K562 (cell line): ENCODE measurements at regions of chr15 and their contacts with region 1.

Region 1: DNA sequence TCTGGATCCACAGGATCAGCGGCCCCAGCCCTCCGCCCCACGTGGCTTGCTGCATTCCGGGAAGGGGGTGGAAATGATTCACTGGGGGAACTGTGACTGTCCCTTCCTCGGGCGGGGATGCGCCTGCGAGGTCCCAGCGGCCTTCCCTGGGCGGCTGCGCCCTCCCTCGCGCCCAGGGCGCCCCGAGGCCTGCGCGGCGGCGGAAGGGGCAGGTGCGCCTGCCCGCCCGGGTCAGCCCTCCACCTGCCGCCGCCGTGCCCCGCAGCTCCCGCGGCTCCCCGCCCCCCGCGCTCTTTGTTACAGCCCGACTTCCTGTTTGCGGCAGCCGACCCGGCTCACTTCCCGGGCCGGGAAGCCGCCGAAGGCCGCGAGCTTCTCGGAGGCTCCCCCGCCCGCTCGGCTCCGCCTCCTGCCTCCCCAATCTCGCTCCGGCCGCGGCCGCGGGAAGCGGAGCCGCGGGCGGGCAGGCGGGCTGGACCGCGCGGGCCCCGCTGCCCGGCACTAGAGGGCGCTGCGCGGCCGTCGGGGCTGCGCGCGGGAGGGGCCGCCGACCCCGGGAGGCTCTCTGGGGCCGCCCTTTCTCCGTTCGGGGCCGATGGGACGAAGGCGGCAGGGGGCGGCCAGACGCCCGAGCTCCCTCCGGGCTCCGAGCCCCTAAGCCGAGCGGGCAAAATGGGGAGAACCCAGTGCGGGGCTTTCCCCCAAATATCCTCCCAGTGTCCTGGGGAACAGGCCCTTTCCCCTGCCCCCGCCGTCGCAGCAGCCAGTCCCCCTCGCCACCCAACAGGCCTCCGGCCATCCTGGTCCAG is 11.5 kb upstream of the CHAC1 start:
- DNase-seq: peak; percentile 81 to 95 (median 94)
- ATAC-seq: peak; percentile 94
- H3K4me3 ChIP-seq: peak overlapping the region; percentile 56
- H3K27ac ChIP-seq: peak overlapping the region; percentile 71; the same call in 2 of the 3 replicates
- H3K4me1 ChIP-seq: peaks cover 5 to 28% of the 10 kb centered on the region in 2 experiments; a peak in 4 of 5 replicates
- H3K27me3 ChIP-seq: peaks cover 2 to 13% of the 10 kb centered on the region in 2 experiments; a peak in 3 of 5 replicates
- CTCF ChIP-seq: peak; percentile 48 to 68 (median 63)
- EP300 ChIP-seq: no peak
- POLR2A ChIP-seq: peak; percentile 54; the same call in 1 of the 2 replicates
- RAD21 ChIP-seq: peak; percentile 40 to 72

Region 2: DNA sequence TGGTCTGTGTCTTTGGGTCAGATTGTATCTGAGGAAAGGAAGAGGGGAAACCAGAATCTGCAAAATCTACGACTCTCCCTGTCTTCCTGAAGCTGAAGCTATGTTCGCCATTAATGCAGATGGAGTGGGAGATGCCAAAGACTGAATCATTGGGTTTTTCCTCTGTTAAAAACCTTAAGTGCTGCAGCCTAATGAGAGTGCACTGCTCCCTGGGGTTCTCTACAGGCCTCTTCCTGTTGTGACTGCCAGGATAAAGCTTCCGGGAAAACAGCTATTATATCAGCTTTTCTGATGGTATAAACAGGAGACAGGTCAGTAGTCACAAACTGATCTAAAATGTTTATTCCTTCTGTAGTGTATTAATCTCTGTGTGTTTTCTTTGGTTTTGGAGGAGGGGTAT is 210.7 kb before region 1 on chr15:
- CTCF ChIA-PET with region 1: no interaction called
- POLR2A ChIA-PET with region 1: no interaction called
- in situ Hi-C with region 1: no loop called
- intact Hi-C with region 1: no loop called
- DNase-seq: no peak
- ATAC-seq: no peak
- H3K4me3 ChIP-seq: no peak overlapping the region
- H3K27ac ChIP-seq: no peak overlapping the region
- H3K4me1 ChIP-seq: 0 out of 5 replicates have a peak, but pooled peaks cover 0 to 4% of the 10 kb centered on the region in 2 experiments
- H3K27me3 ChIP-seq: no peaks in the 10 kb centered on the region
- CTCF ChIP-seq: no peak
- EP300 ChIP-seq: no peak
- POLR2A ChIP-seq: no peak
- RAD21 ChIP-seq: no peak

Region 3: DNA sequence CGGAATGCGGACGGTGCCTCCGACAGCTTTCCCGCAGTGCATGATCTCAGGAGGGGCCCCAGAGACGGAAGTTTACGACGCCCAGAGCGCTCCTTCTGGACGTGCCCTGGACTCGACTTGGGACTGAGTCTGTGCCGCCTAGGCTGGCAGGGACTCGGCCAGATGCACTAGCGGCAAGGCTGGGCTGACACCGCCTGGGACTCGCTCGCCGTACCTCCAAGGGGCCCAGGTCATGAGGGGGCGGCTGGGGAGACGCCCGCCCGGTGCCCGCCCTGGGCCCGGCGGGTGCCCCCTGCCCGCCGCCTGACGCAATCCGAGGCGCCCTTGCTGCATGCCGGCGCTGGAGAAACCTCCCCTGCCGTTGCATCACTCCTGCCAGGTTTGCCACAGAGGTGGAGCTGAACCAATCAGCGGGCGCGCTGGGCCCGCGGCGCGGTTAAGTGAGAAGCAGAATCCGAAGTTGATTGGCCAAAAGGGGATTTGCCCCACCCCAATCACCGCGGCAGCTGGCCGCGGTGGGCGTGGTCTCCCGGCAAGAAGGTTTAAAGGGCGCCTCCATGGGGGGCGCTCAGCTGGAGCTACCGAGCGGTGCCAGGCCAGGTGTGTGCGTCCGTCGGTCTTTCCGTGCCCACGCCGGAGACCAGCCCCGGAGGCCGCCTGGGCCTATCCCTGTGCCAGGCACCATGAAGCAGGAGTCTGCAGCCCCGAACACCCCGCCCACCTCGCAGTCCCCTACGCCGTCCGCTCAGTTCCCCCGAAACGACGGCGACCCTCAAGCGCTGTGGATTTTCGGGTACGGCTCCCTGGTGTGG is 11.4 kb after region 1 on chr15 and contains the start of gene CHAC1:
- CTCF ChIA-PET with region 1: no interaction called
- POLR2A ChIA-PET with region 1: interaction called, 17 read pairs
- in situ Hi-C with region 1: no loop called
- intact Hi-C with region 1: no loop called
- DNase-seq: peak; percentile 91 to 98 (median 95)
- ATAC-seq: peak; percentile 83
- H3K4me3 ChIP-seq: peak within 1 kb of the TSS; percentile 61
- H3K27ac ChIP-seq: peak within 1 kb of the TSS; percentile 70
- H3K4me1 ChIP-seq: peaks cover 16 to 35% of the 10 kb centered on the region in 2 experiments; a peak in 4 of 5 replicates
- H3K27me3 ChIP-seq: no peaks in the 10 kb centered on the region; a peak in 1 of 5 replicates
- CTCF ChIP-seq: no peak
- EP300 ChIP-seq: peak; percentile 42
- POLR2A ChIP-seq: peak; percentile 67; the same call in 1 of the 2 replicates
- RAD21 ChIP-seq: no peak
- polyA plus RNA-seq, gene CHAC1: 2.5 to 4.4 TPM

Region 4: GRCh38 chr15:41001524-41002214 is 59.9 kb after region 1 on chr15:
- CTCF ChIA-PET with region 1: no interaction called
- POLR2A ChIA-PET with region 1: no interaction called
- in situ Hi-C with region 1: no loop called
- intact Hi-C with region 1: no loop called
- DNase-seq: no peak
- ATAC-seq: no peak
- H3K4me3 ChIP-seq: no peak overlapping the region
- H3K27ac ChIP-seq: no peak overlapping the region
- H3K4me1 ChIP-seq: no peaks in the 10 kb centered on the region
- H3K27me3 ChIP-seq: no peaks in the 10 kb centered on the region
- CTCF ChIP-seq: no peak
- EP300 ChIP-seq: no peak
- POLR2A ChIP-seq: no peak
- RAD21 ChIP-seq: no peak